ENCODE measurements at regions of chr9 and their contacts with region 1.

Region 1: DNA sequence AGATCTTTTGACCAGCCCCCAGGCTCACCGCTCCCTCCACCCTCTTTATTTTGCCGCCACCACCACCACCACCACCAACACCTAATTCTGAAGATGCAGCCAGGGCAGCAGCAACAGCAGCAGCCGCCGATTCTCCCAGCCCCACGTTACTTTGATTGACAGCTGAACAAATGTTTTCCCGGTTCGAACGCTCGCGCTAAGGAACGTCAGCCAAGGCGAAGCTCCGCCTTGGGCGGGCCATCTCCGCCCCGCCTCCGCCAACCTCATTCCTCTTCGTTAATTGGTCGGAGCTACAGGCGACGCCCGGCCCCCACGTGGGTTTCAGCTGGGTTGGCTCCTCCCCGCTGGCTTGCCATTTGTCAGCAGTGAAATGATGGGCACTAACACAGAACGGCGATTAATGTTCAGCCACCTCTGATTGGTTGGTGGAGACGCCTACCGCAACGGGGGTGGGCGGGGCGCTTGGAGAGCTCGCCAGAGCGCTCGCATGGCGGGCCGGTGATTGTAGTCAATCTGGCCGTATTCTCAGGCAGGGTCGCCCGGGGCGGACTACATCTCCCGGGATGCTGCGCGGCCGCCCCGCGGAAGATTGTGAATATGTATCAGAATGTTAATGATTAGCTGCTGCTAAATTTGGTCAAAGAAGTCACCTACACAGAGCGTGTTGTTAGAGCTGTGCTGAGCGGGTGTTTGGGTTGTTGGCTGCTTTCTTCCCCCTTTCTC is at the start of gene TLE4:
- DNase-seq: peak; percentile 100
- ATAC-seq: peak; percentile 88
- H3K4me3 Mint-ChIP-seq: no peak within 1 kb of the TSS
- H3K27ac Mint-ChIP-seq: peak within 1 kb of the TSS; percentile 69
- H3K4me1 Mint-ChIP-seq: peaks cover 28% of the 10 kb centered on the region
- H3K27me3 Mint-ChIP-seq: peaks cover 4% of the 10 kb centered on the region
- CTCF ChIP-seq: no peak
- total RNA-seq, gene TLE4: 30.8 to 31.9 TPM

Region 2: DNA sequence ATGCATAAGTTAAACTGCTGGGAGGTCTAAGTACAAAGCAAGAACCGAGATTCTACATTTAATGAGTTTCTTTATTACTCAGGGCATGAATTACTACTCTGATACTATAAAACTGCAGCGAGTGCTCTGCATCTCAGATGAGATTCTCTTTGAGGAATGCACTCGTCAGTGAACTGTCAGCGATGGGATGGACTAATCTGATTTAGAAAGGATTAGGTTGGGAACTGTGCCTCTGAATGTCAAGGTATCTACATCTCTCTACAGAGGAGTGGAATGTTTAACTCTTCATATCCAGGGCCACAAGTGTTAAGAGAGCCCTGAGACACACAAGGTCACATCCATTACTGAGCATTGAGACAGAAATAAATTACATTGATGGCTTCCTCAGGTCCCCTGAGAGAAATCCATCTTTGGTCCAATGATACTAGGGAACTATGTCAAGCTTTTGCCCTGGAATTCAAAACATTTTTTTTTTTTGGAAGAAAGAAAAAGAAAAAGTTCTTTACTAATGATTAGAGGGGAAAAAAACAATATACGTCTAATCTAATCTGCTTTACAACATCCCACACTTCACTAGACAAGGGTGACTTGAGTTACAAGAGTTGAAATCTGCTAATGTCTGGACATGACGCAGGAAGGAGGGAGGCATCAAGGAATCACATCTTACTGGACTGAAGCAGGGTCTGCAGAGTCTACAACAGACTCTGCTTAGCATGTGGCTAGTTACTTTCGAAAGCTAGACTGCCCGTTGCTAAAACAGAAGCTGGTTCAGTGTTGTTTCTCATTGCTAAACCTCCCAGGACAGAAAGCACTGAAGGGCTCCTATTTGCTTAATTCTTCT is 269.7 kb before region 1 on chr9:
- CTCF ChIA-PET with region 1: no interaction called
- POLR2A ChIA-PET with region 1: no interaction called
- intact Hi-C with region 1: no loop called
- DNase-seq: no peak
- ATAC-seq: no peak
- H3K4me3 Mint-ChIP-seq: no peak overlapping the region
- H3K27ac Mint-ChIP-seq: no peak overlapping the region
- H3K4me1 Mint-ChIP-seq: no peaks in the 10 kb centered on the region
- H3K27me3 Mint-ChIP-seq: peaks cover 3% of the 10 kb centered on the region
- CTCF ChIP-seq: no peak

Region 3: GRCh38 chr9:79542735-79543620 is 28.5 kb before region 1 on chr9:
- CTCF ChIA-PET with region 1: interaction called, 4 read pairs
- POLR2A ChIA-PET with region 1: interaction called, 10 read pairs
- intact Hi-C with region 1: no loop called
- DNase-seq: no peak
- ATAC-seq: no peak
- H3K4me3 Mint-ChIP-seq: no peak overlapping the region
- H3K27ac Mint-ChIP-seq: no peak overlapping the region
- H3K4me1 Mint-ChIP-seq: peaks cover 24% of the 10 kb centered on the region
- H3K27me3 Mint-ChIP-seq: peaks cover 2% of the 10 kb centered on the region
- CTCF ChIP-seq: no peak

Region 4: DNA sequence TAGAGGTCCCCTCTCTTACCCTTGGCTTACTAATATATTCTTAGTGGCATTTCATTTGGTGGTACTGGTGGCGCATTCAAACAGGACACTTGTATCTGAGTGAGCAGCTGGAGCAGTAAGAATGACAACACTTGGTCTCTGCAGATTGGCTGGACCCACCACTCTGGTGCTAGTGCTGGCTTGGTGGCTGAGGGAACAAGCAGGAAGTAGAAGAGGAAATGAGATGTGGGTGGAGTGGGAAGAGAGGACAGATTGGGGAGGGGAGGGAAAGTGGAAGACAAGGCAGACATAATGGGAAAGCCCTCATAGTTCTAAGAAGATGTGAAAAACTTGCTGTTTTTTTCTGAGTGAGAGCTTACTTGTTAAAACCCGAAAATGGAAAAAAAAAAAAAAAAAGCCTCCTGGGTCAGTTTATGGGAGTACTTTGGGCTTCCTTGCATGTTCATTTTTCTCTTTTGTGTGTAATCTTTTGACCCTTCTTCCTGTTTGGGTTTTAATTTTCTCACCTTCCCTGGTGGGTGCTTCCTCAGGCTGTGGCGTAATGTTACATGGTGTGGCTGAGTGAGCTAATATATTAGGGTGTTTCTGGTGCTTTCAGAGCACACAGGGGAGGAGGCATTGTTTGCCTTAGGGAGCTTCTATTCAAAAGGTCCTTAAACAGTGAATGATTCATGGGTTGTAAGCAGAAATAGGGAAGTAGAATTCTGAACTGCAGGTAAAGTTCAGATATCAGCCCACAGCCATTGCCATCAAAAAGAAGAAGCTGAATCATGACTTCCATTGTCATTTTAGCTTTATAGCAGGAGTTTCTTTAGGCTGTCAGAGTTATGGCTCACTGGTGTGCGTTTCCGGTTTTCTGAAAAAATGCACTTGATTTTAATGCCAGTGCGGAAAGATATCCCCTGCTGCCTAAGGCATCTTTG is 52.6 kb after region 1 on chr9:
- CTCF ChIA-PET with region 1: interaction called, 3 read pairs
- POLR2A ChIA-PET with region 1: interaction called, 11 read pairs
- intact Hi-C with region 1: loop called (anchors 2 kb)
- DNase-seq: peak; percentile 78
- ATAC-seq: peak; percentile 94
- H3K4me3 Mint-ChIP-seq: peak overlapping the region; percentile 11
- H3K27ac Mint-ChIP-seq: peak overlapping the region; percentile 89
- H3K4me1 Mint-ChIP-seq: peaks cover 74% of the 10 kb centered on the region
- H3K27me3 Mint-ChIP-seq: no peaks in the 10 kb centered on the region
- CTCF ChIP-seq: no peak

Region 5: GRCh38 chr9:79686381-79687130 is 115.1 kb after region 1 on chr9:
- CTCF ChIA-PET with region 1: no interaction called
- POLR2A ChIA-PET with region 1: interaction called, 5 read pairs
- intact Hi-C with region 1: loop called (anchors 10 kb)
- DNase-seq: no peak
- ATAC-seq: peak; percentile 41
- H3K4me3 Mint-ChIP-seq: peak overlapping the region; percentile 52
- H3K27ac Mint-ChIP-seq: peak overlapping the region; percentile 92
- H3K4me1 Mint-ChIP-seq: peaks cover 56% of the 10 kb centered on the region
- H3K27me3 Mint-ChIP-seq: no peaks in the 10 kb centered on the region
- CTCF ChIP-seq: no peak

Measured in activated CD8-positive, alpha-beta T cell treated with anti-CD3 and anti-CD28 coated beads for 36 hours (primary cell).